Caco-2 (cell line): ENCODE measurements at regions of chr2 and their contacts with region 1.

Region 1: GRCh38 chr2:211745295-211746097 is 793.1 kb downstream of the ERBB4 start:
- DNase-seq: peak; percentile 63 to 69
- H3K4me3 ChIP-seq: no peak overlapping the region
- H3K4me3 Mint-ChIP-seq: no peak overlapping the region
- H3K27ac Mint-ChIP-seq: no peak overlapping the region
- H3K4me1 ChIP-seq: peaks cover 5% of the 10 kb centered on the region; the same call in 1 of the 2 replicates
- H3K4me1 Mint-ChIP-seq: no peaks in the 10 kb centered on the region
- H3K27me3 ChIP-seq: no peaks in the 10 kb centered on the region
- H3K27me3 Mint-ChIP-seq: peaks cover 5% of the 10 kb centered on the region
- CTCF ChIP-seq: peak; percentile 81 to 90

Region 2: DNA sequence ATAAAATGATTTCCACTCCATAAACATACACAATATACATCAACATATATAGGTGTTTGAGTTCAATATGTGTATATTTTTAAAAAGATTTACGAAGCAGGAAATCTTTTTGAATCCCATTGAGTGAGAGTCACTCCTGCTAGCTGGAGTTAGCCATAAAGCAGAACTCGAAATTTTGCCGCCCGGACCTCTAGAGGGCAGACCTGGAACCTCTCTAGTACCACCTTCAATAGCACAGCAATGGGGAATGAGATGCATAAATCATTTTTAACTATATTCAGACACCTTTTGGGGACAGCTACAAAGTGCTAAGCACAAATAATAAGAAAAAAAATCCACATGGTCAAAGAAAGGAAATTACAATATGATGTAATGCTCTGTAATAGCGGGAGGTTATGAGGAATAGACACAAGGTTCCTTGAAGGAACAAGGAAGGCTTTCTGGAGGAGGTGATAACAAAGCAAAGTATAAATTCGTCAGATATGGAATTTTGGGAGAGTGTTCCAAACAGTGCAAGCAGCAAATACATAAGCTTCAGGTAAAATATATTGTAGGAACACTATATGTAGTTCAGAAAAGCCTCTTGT is 259.7 kb after region 1 on chr2:
- CTCF ChIA-PET with region 1: no interaction called
- POLR2A ChIA-PET with region 1: no interaction called
- intact Hi-C with region 1: loop called (anchors 1 kb)
- DNase-seq: peak in 1 of 2 experiments; percentile 55
- H3K4me3 ChIP-seq: no peak overlapping the region
- H3K4me3 Mint-ChIP-seq: no peak overlapping the region
- H3K27ac Mint-ChIP-seq: no peak overlapping the region
- H3K4me1 ChIP-seq: peaks cover 4% of the 10 kb centered on the region; the same call in 1 of the 2 replicates
- H3K4me1 Mint-ChIP-seq: peaks cover 11% of the 10 kb centered on the region
- H3K27me3 ChIP-seq: no peaks in the 10 kb centered on the region
- H3K27me3 Mint-ChIP-seq: no peaks in the 10 kb centered on the region
- CTCF ChIP-seq: peak; percentile 41 to 72

Region 3: GRCh38 chr2:212015588-212015987 is 270.1 kb after region 1 on chr2:
- CTCF ChIA-PET with region 1: no interaction called
- POLR2A ChIA-PET with region 1: no interaction called
- intact Hi-C with region 1: no loop called
- DNase-seq: no peak
- H3K4me3 ChIP-seq: no peak overlapping the region
- H3K4me3 Mint-ChIP-seq: no peak overlapping the region
- H3K27ac Mint-ChIP-seq: no peak overlapping the region
- H3K4me1 ChIP-seq: no peaks in the 10 kb centered on the region
- H3K4me1 Mint-ChIP-seq: no peaks in the 10 kb centered on the region
- H3K27me3 ChIP-seq: no peaks in the 10 kb centered on the region
- H3K27me3 Mint-ChIP-seq: no peaks in the 10 kb centered on the region
- CTCF ChIP-seq: no peak

Region 4: GRCh38 chr2:212147921-212148513 is 402.5 kb after region 1 on chr2:
- CTCF ChIA-PET with region 1: no interaction called
- POLR2A ChIA-PET with region 1: no interaction called
- intact Hi-C with region 1: loop called (anchors 10 kb)
- DNase-seq: peak in 1 of 2 experiments; percentile 26
- H3K4me3 ChIP-seq: no peak overlapping the region
- H3K4me3 Mint-ChIP-seq: no peak overlapping the region
- H3K27ac Mint-ChIP-seq: no peak overlapping the region
- H3K4me1 ChIP-seq: no peaks in the 10 kb centered on the region
- H3K4me1 Mint-ChIP-seq: no peaks in the 10 kb centered on the region
- H3K27me3 ChIP-seq: no peaks in the 10 kb centered on the region
- H3K27me3 Mint-ChIP-seq: no peaks in the 10 kb centered on the region
- CTCF ChIP-seq: peak; percentile 11 to 49

Region 5: GRCh38 chr2:212249451-212249850 is 504.0 kb after region 1 on chr2:
- CTCF ChIA-PET with region 1: interaction called, 3 read pairs
- POLR2A ChIA-PET with region 1: no interaction called
- intact Hi-C with region 1: loop called (anchors 1 kb)
- DNase-seq: no peak
- H3K4me3 ChIP-seq: no peak overlapping the region
- H3K4me3 Mint-ChIP-seq: no peak overlapping the region
- H3K27ac Mint-ChIP-seq: no peak overlapping the region
- H3K4me1 ChIP-seq: no peaks in the 10 kb centered on the region
- H3K4me1 Mint-ChIP-seq: no peaks in the 10 kb centered on the region
- H3K27me3 ChIP-seq: no peaks in the 10 kb centered on the region
- H3K27me3 Mint-ChIP-seq: peaks cover 3% of the 10 kb centered on the region
- CTCF ChIP-seq: peak; percentile 25 to 34

Region 6: DNA sequence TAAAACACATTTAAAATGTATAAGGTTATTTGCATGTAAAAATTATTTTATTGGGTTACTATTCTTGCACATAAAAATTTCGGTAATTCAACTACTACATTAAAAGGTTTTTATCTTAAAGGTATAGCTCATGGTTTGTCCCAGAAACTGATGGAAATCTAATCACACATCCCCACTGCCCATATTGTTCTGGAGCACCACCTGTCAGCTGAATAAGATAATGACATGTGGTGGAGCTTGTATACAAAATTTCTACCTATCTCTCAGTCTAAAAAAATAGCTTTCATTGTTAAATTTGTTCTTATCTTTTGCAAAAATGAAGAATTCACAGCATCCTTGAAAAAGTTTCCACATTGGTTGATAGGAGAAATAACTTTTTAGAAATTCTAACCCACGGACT is 774.8 kb after region 1 on chr2:
- CTCF ChIA-PET with region 1: no interaction called
- POLR2A ChIA-PET with region 1: no interaction called
- intact Hi-C with region 1: loop called (anchors 5 kb)
- DNase-seq: peak in 1 of 2 experiments; percentile 15
- H3K4me3 ChIP-seq: no peak overlapping the region
- H3K4me3 Mint-ChIP-seq: no peak overlapping the region
- H3K27ac Mint-ChIP-seq: no peak overlapping the region
- H3K4me1 ChIP-seq: no peaks in the 10 kb centered on the region
- H3K4me1 Mint-ChIP-seq: no peaks in the 10 kb centered on the region
- H3K27me3 ChIP-seq: no peaks in the 10 kb centered on the region
- H3K27me3 Mint-ChIP-seq: peaks cover 2% of the 10 kb centered on the region
- CTCF ChIP-seq: no peak

Region 7: DNA sequence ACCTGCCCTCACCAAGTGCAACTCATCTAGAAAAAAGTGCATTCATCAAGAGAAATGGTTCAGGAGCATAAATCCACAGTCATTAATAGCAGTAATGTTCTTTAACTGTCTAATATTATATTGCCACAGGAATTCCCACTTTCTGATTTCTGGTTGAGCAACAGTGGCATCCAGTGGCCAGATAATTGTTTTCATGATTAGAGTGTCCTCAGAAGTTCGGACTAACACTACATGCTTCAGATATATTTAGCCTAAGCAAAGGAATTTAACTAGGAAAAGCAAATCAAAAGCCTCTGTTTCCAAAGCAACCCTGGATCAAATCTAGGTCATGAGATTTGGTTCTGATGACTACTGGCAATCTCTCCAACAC is 802.9 kb after region 1 on chr2:
- CTCF ChIA-PET with region 1: no interaction called
- POLR2A ChIA-PET with region 1: no interaction called
- intact Hi-C with region 1: loop called (anchors 1 kb)
- DNase-seq: peak in 1 of 2 experiments; percentile 13
- H3K4me3 ChIP-seq: no peak overlapping the region
- H3K4me3 Mint-ChIP-seq: no peak overlapping the region
- H3K27ac Mint-ChIP-seq: no peak overlapping the region
- H3K4me1 ChIP-seq: no peaks in the 10 kb centered on the region
- H3K4me1 Mint-ChIP-seq: no peaks in the 10 kb centered on the region
- H3K27me3 ChIP-seq: no peaks in the 10 kb centered on the region
- H3K27me3 Mint-ChIP-seq: peaks cover 2% of the 10 kb centered on the region
- CTCF ChIP-seq: peak; percentile 12 to 46